Activated B cell treated with CpG ODN at 0.5 μM for 24 hours (primary cell): ENCODE measurements at regions of chr5 and their contacts with region 1.

Region 1: GRCh38 chr5:181098762-181099601 is 32.0 kb downstream of the OR2V1 start:
- DNase-seq: no peak
- ATAC-seq: peak; percentile 25
- H3K4me3 Mint-ChIP-seq: no peak overlapping the region
- H3K27ac Mint-ChIP-seq: no peak overlapping the region
- H3K4me1 Mint-ChIP-seq: peaks cover 12% of the 10 kb centered on the region
- H3K27me3 Mint-ChIP-seq: peaks cover 22% of the 10 kb centered on the region
- CTCF ChIP-seq: no peak

Region 2: DNA sequence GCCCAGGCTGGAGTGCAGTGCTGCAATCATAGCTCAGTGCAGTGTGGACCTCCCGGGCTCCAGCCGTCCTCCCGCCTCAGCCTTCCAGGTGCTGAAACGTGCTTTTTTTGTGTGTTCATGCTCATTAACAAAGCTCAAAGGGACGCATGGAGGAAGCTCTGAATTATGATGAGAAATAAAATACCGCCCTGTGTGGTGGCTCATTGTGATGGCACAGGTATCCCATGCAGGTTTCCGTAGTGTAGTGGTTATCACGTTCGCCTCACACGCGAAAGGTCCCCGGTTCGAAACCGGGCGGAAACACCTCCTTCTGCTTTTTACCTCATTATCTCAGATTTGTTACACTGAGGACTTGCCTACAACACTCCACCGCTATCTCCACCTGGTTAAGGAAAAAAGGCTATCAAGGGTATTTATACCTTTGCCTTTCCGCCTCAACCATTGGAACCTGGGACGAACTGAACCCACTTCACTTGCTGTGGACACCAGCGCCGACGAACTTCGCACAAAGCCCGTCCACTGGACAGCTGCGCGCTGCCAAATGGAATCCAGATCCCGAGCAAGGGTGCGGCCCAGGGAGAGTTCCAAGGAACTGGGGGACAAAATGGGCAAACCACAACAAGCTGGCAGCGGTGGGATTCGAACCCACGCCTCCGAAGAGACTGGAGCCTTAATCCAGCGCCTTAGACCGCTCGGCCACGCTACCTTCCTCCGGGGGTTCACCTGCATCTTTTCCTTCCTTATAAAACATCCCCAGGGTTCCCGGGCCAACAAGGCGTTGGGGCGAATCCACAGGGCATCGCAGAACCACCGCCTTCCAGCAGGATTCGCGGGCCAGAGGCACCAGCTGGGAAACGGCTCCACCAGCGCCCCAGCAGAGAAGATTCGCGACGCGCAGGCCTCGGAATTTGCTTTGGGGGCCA is 74.7 kb after region 1 on chr5:
- CTCF ChIA-PET with region 1: no interaction called
- POLR2A ChIA-PET with region 1: no interaction called
- intact Hi-C with region 1: loop called (anchors 5 kb)
- DNase-seq: peak; percentile 40
- ATAC-seq: peak; percentile 76
- H3K4me3 Mint-ChIP-seq: peak overlapping the region; percentile 83
- H3K27ac Mint-ChIP-seq: peak overlapping the region; percentile 78
- H3K4me1 Mint-ChIP-seq: peaks cover 33% of the 10 kb centered on the region
- H3K27me3 Mint-ChIP-seq: peaks cover 16% of the 10 kb centered on the region
- CTCF ChIP-seq: no peak